AG04449 (cell line): ENCODE measurements at regions of chr12 and their contacts with region 1.

Region 1: GRCh38 chr12:12032851-12033588 is 37.7 kb upstream of the BCL2L14 start:
- DNase-seq: peak; percentile 41
- H3K4me3 ChIP-seq: peak overlapping the region; percentile 57
- CTCF ChIP-seq: peak; percentile 75

Region 2: GRCh38 chr12:11581179-11581755 is 451.8 kb before region 1 on chr12:
- CTCF ChIA-PET with region 1: interaction called, 180 read pairs
- POLR2A ChIA-PET with region 1: no interaction called
- DNase-seq: no peak
- H3K4me3 ChIP-seq: no peak overlapping the region
- CTCF ChIP-seq: peak; percentile 15

Region 3: DNA sequence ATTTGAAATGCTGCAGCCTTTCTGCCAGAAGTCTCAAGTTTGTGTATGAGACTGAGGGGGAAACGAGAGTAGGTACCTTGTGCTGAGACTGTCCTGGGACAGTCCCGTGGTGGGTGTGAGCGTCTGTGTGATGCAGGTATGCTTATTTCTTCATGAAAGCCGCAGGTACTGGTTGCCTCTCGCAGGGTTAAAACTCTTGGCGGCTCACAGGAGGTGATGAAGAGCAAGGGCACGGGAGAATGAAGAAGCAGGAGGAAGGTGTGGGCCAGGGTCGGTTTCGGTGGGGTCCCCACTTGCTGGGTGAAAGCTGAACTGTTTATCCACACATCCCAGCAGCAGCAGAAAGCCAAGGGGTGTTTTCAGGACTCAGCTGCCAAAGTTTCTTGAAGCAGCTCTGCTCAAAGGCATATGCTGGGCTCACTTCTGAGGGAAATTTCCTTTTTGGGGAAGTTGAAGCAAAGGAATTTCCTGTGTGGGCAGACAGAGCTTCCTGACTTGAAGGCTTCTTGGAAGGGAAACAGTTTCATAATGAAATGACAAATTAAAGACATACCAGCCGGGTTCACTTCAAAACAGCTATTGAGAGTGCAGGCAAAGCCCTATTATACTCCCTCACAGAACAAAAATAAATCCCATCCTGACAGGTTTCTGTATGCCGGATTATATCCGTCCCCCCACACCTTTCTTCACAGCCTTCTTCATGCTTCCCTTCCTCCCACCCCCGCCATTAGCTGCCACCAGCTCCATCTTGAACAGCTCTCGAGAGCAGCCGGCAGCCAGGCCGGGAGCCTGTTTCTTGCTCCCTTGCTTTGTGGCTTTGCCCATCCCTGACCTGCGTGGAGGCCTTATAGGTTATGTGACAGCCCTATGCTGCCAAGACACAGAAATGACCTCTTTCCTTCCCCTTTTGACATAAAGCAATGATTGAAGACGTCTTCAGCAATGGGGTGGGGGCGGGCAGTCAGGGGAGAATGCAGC is 266.9 kb before region 1 on chr12:
- CTCF ChIA-PET with region 1: interaction called, 11 read pairs
- POLR2A ChIA-PET with region 1: interaction called, 4 read pairs
- DNase-seq: no peak
- H3K4me3 ChIP-seq: no peak overlapping the region
- CTCF ChIP-seq: no peak

Region 4: GRCh38 chr12:11798856-11799501 is 234.0 kb before region 1 on chr12:
- CTCF ChIA-PET with region 1: interaction called, 10 read pairs
- POLR2A ChIA-PET with region 1: no interaction called
- DNase-seq: peak; percentile 71
- H3K4me3 ChIP-seq: no peak overlapping the region
- CTCF ChIP-seq: no peak

Region 5: DNA sequence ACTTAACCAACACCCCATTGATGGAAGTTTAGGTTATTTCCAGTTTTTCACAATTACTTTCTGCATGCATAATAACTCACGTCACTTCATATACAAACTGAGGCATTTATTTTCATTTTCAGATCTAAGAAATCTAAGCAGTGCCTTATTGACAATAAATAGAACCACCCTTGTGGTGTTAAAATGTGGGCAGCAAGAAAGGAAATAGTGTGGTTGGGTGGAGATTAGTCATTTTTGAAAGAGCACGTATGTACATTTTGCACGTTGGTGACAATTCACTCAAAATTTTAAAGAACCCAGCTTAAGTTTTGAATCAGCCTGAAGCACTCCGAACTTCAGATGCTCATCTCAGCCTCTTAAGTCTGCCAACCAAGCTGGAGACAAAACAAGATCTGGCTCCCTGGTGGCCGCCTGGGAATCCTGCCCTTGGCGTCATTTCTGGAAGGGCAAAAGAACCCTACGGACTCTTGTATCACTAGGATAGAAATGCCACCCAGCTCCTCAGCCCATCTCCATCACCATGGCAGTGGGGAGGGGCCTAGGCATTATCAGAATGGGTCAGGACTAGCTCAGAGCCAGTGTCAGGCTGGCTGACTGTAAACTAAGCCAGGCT is 51.8 kb before region 1 on chr12:
- CTCF ChIA-PET with region 1: no interaction called
- POLR2A ChIA-PET with region 1: no interaction called
- DNase-seq: no peak
- H3K4me3 ChIP-seq: no peak overlapping the region
- CTCF ChIP-seq: no peak

Region 6: GRCh38 chr12:12003609-12004008 is 29.4 kb before region 1 on chr12:
- CTCF ChIA-PET with region 1: interaction called, 10 read pairs
- POLR2A ChIA-PET with region 1: no interaction called
- DNase-seq: no peak
- H3K4me3 ChIP-seq: no peak overlapping the region
- CTCF ChIP-seq: no peak

Region 7: GRCh38 chr12:12051668-12052067 is 18.6 kb after region 1 on chr12:
- CTCF ChIA-PET with region 1: interaction called, 14 read pairs
- POLR2A ChIA-PET with region 1: no interaction called
- DNase-seq: no peak
- H3K4me3 ChIP-seq: no peak overlapping the region
- CTCF ChIP-seq: no peak

Region 8: DNA sequence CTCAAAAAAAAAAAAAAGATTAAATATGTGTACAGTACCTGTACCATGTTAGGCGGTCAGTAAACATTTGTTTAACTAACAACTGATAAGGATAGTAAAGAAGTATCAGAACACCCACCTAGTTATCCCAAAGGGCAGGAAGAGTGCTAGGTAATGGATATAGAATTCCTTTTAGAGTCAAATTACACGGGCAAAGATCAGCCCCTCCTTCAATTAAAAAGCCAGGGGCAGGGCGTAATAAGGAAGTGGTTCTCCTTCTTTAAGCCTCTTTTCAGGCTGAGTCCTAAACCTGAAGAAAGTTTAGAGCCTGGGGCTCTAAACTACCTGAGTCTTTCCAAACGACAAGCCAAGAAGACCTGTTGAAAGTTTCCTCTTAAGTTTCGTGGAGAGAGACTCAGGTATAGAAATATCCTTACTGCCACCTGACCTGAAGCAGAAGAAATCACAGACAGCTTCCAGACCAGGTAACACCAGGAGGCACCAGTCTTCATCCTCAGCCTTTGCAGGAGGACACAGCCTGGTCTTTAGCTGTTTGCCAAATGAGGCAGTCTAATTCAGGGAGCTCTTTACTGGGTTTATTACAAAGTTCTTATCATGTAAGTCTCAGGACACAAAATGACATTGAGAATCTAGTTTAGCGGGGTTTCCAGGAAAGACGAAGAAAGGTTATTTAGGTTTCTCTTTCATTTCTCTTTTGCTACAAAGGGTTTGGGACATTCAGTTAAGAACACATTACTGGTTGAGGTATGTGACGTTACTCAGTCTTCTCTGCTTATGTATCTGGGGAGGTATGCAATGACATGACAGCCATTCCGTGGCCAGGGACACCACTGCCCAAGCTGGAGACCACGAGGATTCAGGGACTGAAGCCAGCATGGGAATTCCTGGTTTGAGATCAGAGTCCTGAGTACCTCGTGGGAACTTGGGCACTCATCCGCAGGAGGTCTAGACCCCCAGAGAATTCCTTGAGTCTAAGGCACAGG is 37.9 kb after region 1 on chr12 and contains the start of gene BCL2L14:
- CTCF ChIA-PET with region 1: no interaction called
- POLR2A ChIA-PET with region 1: no interaction called
- DNase-seq: no peak
- H3K4me3 ChIP-seq: no peak within 1 kb of the TSS
- CTCF ChIP-seq: no peak

Region 9: GRCh38 chr12:12334367-12335040 is 301.5 kb after region 1 on chr12:
- CTCF ChIA-PET with region 1: interaction called, 73 read pairs
- POLR2A ChIA-PET with region 1: no interaction called
- DNase-seq: no peak
- H3K4me3 ChIP-seq: no peak overlapping the region
- CTCF ChIP-seq: peak; percentile 73